ENCODE measurements at regions of chr6 and their contacts with region 1.

Region 1: DNA sequence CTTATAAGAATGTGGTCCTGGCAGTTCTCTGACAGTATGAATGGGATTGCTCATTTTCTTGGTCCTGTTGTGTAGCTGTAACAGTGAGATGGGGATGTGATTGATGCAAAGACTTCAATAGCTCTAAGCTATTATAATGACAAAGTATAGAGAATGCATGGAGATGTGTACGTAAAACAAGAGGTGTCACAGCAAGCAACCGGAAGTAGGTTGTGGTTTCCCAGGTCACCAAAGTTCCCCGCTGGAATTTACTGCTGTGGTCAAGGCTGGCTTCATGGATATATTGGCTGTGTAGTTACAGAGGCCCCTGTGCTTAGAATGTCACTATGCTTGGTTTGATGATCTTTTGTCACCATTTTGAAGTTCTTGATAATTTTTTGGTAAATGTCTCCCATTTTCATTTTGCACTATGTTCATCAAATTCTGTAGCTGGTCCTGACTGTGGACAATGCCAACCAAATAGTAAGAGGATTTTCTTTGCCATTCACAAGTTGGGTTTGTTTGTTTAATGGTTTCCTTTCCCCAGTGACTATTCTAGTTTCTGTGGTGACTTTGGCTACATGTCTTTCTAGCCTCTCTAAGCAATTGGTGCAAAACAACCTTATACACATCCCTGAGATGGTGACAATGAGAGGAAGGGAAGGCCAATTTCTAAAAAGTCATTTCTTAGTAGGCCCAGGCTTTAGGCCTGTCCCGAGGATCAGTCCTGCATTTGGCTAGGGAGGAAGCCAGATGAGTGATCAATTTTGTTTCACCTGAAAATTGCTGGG is 10.5 kb downstream of the DNAH8 start:
- DNase-seq: no peak
- ATAC-seq: no peak
- H3K4me3 ChIP-seq: no peak overlapping the region
- H3K4me3 Mint-ChIP-seq: no peak overlapping the region
- H3K27ac ChIP-seq: no peak overlapping the region
- H3K27ac Mint-ChIP-seq: no peak overlapping the region
- H3K4me1 ChIP-seq: no peaks in the 10 kb centered on the region
- H3K4me1 Mint-ChIP-seq: peaks cover 0 to 7% (median 4%) of the 10 kb centered on the region in 3 donors
- H3K27me3 ChIP-seq: peaks cover 0 to 3% of the 10 kb centered on the region in 2 experiments
- H3K27me3 Mint-ChIP-seq: peaks cover 3 to 8% of the 10 kb centered on the region in 2 donors

Region 2: DNA sequence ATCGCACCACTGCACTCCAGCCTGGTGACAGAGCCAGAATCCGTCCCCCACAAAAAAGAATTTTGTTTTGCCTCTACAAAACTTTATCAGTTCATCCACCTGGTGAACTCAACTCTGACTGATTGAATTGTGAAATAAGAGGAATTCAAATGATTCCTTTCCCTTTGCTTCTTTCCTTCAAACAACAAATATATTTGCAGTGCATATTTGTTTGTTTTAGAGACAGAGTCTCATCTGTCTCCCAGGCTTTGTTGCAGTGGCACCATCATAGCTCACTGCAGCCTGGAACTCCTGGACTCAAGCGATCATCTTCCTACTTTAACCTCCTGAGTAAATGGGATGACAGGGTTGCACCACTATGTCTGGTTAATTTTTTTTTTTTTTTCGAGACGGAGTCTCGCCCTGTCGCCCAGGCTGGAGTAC is 1578.9 kb before region 1 on chr6:
- CTCF ChIA-PET with region 1: no interaction called
- POLR2A ChIA-PET with region 1: interaction called in 1 of 2 experiments, 12 read pairs
- DNase-seq: no peak
- ATAC-seq: no peak
- H3K4me3 ChIP-seq: no peak overlapping the region
- H3K4me3 Mint-ChIP-seq: no peak overlapping the region
- H3K27ac ChIP-seq: no peak overlapping the region
- H3K27ac Mint-ChIP-seq: no peak overlapping the region
- H3K4me1 ChIP-seq: no peaks in the 10 kb centered on the region
- H3K4me1 Mint-ChIP-seq: peaks cover 0 to 13% (median 10%) of the 10 kb centered on the region in 3 donors
- H3K27me3 ChIP-seq: peaks cover 0 to 10% of the 10 kb centered on the region in 2 experiments
- H3K27me3 Mint-ChIP-seq: peaks cover 0 to 2% of the 10 kb centered on the region in 2 donors

Region 3: GRCh38 chr6:38039502-38039901 is 686.1 kb before region 1 on chr6:
- CTCF ChIA-PET with region 1: no interaction called
- POLR2A ChIA-PET with region 1: no interaction called
- DNase-seq: no peak
- ATAC-seq: no peak
- H3K4me3 ChIP-seq: no peak overlapping the region
- H3K4me3 Mint-ChIP-seq: no peak overlapping the region
- H3K27ac ChIP-seq: no peak overlapping the region
- H3K27ac Mint-ChIP-seq: no peak overlapping the region
- H3K4me1 ChIP-seq: peaks cover 0 to 5% of the 10 kb centered on the region in 2 experiments
- H3K4me1 Mint-ChIP-seq: peaks cover 43 to 58% (median 49%) of the 10 kb centered on the region in 3 donors
- H3K27me3 ChIP-seq: no peaks in the 10 kb centered on the region
- H3K27me3 Mint-ChIP-seq: no peaks in the 10 kb centered on the region

Region 4: GRCh38 chr6:38715016-38715689 is 10.4 kb before region 1 on chr6 and contains the start of gene DNAH8:
- CTCF ChIA-PET with region 1: no interaction called
- POLR2A ChIA-PET with region 1: interaction called, 5 to 10 read pairs
- DNase-seq: peak in 2 of 35 experiments; percentile 2 to 3
- ATAC-seq: peak in 2 of 4 experiments; percentile 13 to 32
- H3K4me3 ChIP-seq: peak within 1 kb of the TSS; percentile 29
- H3K4me3 Mint-ChIP-seq: peak within 1 kb of the TSS; percentile 12 to 64 (median 35)
- H3K27ac ChIP-seq: peak within 1 kb of the TSS; percentile 36
- H3K27ac Mint-ChIP-seq: peak within 1 kb of the TSS; percentile 84 to 94
- H3K4me1 ChIP-seq: peaks cover 0 to 18% of the 10 kb centered on the region in 2 experiments
- H3K4me1 Mint-ChIP-seq: peaks cover 12 to 27% (median 20%) of the 10 kb centered on the region in 3 donors
- H3K27me3 ChIP-seq: peaks cover 13 to 18% of the 10 kb centered on the region in 2 experiments
- H3K27me3 Mint-ChIP-seq: peaks cover 34 to 39% of the 10 kb centered on the region in 2 donors
- total RNA-seq, gene DNAH8: 0.03 to 0.12 (median 0.08) TPM in 4 of 5 donors, not detected in the other

Region 5: DNA sequence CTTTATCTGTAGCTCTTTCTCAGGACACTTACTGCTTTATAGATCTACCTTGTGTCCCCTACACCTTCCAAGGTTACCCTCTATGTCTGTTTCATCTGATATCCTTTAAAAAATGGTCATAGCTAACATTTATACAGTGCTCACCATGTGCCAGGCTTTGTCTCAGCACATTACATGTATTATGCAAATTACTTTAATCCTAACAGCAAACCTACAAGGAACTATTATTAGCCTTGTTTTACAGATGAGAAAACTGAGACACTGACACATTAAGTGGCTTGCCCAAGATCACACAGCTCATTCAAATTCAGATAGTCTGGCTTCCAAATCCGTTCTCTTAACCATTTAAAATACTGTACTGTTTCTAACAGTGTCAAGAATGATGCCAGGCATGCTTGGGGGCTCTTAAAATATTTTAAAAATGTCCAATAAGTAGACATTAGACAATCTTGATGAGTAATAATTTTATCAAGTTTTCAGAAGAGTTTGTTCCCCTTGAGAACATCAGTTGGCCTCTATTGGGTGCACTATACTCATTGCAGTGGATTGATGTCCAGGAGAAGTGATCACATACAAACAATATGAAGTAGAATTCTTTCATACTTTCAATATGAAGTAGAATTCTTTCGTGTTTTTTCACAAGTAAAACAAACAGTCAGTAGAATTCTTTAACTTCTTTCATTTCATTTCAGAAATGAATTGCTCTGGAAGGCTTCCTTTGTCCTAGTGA is 59.1 kb after region 1 on chr6:
- CTCF ChIA-PET with region 1: no interaction called
- POLR2A ChIA-PET with region 1: no interaction called
- DNase-seq: no peak
- ATAC-seq: no peak
- H3K4me3 ChIP-seq: no peak overlapping the region
- H3K4me3 Mint-ChIP-seq: no peak overlapping the region
- H3K27ac ChIP-seq: no peak overlapping the region
- H3K27ac Mint-ChIP-seq: no peak overlapping the region
- H3K4me1 ChIP-seq: no peaks in the 10 kb centered on the region
- H3K4me1 Mint-ChIP-seq: no peaks in the 10 kb centered on the region
- H3K27me3 ChIP-seq: peaks cover 0 to 4% of the 10 kb centered on the region in 2 experiments
- H3K27me3 Mint-ChIP-seq: peaks cover 22 to 25% of the 10 kb centered on the region in 2 donors